B cell (primary cell): ENCODE measurements at regions of chr19 and their contacts with region 1.

Region 1: DNA sequence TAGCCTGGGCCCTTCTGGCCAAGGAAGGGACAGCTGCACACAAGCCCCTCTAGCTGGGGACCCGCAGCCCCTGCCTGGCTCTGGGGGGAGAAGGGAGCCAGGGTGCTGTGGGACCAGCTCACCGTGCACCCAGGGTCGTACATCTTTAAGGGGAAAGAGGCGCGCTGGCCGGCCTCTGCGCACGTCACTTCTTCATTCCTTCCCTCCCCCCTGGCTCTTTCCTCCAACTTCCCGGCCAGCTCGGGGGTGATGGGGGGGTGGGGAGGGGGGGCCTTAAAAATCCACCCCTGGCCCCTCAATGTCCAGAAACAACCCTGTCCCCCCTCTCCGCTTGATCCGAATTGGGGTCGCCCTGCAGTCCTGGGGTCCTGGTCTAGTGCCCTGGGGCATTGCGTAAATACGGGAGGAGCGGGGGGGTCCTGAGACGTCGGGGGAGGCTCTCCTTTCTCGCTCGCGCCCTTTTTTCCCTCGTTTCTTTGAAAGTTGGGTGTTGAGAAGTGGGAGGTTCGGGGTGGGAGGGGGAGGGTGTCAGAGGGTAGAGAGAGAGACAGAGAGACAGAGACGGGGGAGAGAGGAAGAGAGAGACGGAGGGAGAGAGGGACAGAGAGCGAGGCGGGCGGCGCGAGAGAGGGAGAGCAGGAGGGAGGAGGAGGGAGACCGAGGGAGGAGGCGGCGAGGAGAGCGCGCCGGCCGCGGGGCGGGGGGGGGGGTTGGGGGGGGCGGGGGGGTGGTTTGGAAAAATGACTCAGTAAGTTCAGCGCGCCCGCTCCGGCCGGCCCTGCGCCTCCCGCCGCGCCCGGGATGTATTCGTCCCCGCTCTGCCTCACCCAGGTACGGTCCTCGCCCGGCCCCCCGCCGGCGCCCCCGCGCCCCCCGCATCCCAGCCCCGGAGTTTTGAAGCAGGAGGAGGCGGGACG is at the start of gene NFIC:
- DNase-seq: no peak
- ATAC-seq: no peak
- H3K4me3 ChIP-seq: peak within 1 kb of the TSS; percentile 29 to 56 (median 44)
- H3K4me3 Mint-ChIP-seq: peak within 1 kb of the TSS; percentile 74
- H3K27ac ChIP-seq: no peak within 1 kb of the TSS
- H3K27ac Mint-ChIP-seq: peak within 1 kb of the TSS; percentile 34
- H3K4me1 ChIP-seq: peaks cover 45 to 52% of the 10 kb centered on the region in 2 donors
- H3K4me1 Mint-ChIP-seq: peaks cover 53% of the 10 kb centered on the region
- H3K27me3 ChIP-seq: peaks cover 0 to 27% (median 11%) of the 10 kb centered on the region in 4 experiments
- H3K27me3 Mint-ChIP-seq: peaks cover 26% of the 10 kb centered on the region
- CTCF ChIP-seq: no peak
- total RNA-seq, gene NFIC: 23.6 and 24.3 TPM in 2 replicates

Region 2: DNA sequence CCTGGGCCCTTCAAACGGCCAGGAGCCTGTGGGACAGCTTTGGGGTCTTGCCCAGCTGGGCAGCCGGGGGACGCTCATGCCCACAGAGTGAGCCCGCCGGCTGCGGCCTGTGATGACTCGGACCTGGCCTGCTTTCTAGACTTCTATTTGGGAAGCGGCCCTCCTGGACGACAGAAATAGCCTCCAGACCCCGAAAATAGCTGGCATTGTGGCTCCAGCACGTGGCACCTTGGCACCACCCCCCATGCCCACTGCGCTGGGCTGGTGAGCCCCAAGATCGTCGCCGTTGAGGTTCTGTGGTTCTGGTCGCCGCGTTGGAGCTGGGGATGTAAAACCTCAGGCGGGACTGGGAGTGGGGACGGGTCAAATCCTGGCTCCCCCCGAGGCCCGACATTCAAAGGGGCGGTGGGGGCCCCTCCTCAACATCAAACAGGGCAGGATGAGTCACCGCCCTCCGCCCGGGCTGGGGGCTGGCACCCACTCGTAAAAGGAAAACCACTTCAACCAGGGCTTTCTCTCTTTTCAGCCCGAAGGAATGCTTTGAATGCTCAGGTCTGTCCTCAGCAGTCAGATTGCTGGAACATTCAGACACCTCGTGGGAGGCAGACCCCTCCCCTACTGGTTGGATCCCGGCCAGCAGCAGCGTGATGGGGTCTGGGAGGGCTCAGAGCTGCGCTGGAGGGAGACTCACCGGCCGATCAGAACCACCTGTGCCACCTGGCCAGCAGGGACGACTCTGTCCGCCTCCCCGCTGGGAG is 848.0 kb before region 1 on chr19:
- CTCF ChIA-PET with region 1: no interaction called
- POLR2A ChIA-PET with region 1: no interaction called
- intact Hi-C with region 1: loop called (anchors 10 kb)
- DNase-seq: no peak
- ATAC-seq: no peak
- H3K4me3 ChIP-seq: no peak overlapping the region
- H3K4me3 Mint-ChIP-seq: no peak overlapping the region
- H3K27ac ChIP-seq: no peak overlapping the region
- H3K27ac Mint-ChIP-seq: no peak overlapping the region
- H3K4me1 ChIP-seq: peaks cover 0 to 4% of the 10 kb centered on the region in 2 donors
- H3K4me1 Mint-ChIP-seq: peaks cover 4% of the 10 kb centered on the region
- H3K27me3 ChIP-seq: no peaks in the 10 kb centered on the region
- H3K27me3 Mint-ChIP-seq: no peaks in the 10 kb centered on the region
- CTCF ChIP-seq: no peak

Region 3: DNA sequence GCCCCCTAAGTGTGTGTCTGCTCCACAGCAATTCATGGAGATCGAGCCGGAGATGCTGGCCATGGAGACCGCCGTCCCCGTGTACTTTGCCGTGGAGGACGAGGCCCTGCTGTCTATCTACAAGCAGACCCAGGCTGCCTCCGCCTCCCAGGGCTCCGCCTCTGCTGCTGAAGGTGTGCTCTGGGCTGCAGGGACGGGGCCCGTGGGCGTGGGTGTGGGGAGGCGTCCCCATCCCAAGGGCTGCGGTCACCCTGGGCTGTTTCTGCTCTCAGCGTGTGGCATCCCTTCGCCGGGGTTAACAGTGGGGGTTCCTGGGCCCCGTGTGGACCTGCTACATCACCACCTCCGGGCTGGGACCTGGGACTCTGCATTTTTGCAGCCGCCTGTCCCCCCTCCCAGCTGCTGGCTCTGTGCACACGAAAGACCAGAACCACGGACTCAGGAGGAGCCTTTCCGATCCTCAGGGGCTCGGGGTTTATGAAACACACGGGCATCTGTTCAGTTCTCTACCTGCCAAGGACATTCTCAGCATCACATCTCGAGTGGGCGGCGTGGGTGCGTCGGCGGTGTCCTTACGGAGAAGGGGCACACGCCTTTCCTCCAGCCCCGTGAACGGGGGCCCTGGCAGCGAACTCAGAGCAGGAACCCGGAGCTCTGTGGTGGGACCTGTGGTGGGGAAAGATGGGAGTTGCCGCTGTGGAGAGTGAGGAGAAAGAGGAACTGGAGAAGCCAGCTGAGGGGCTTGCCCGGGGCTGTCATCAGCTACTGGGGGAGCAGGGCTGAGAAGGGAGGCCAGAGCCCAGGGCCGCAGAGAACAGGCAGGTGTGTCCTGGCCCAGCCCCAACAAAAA is 172.6 kb before region 1 on chr19:
- CTCF ChIA-PET with region 1: no interaction called
- POLR2A ChIA-PET with region 1: no interaction called
- intact Hi-C with region 1: no loop called
- DNase-seq: no peak
- ATAC-seq: peak; percentile 28
- H3K4me3 ChIP-seq: no peak overlapping the region
- H3K4me3 Mint-ChIP-seq: no peak overlapping the region
- H3K27ac ChIP-seq: no peak overlapping the region
- H3K27ac Mint-ChIP-seq: no peak overlapping the region
- H3K4me1 ChIP-seq: peaks cover 6 to 19% of the 10 kb centered on the region in 2 donors
- H3K4me1 Mint-ChIP-seq: peaks cover 17% of the 10 kb centered on the region
- H3K27me3 ChIP-seq: no peaks in the 10 kb centered on the region
- H3K27me3 Mint-ChIP-seq: no peaks in the 10 kb centered on the region
- CTCF ChIP-seq: no peak

Region 4: GRCh38 chr19:3398114-3398899 is 32.2 kb after region 1 on chr19:
- CTCF ChIA-PET with region 1: no interaction called
- POLR2A ChIA-PET with region 1: no interaction called
- intact Hi-C with region 1: no loop called
- DNase-seq: no peak
- ATAC-seq: no peak
- H3K4me3 ChIP-seq: no peak overlapping the region
- H3K4me3 Mint-ChIP-seq: no peak overlapping the region
- H3K27ac ChIP-seq: no peak overlapping the region
- H3K27ac Mint-ChIP-seq: no peak overlapping the region
- H3K4me1 ChIP-seq: no peaks in the 10 kb centered on the region
- H3K4me1 Mint-ChIP-seq: no peaks in the 10 kb centered on the region
- H3K27me3 ChIP-seq: no peaks in the 10 kb centered on the region
- H3K27me3 Mint-ChIP-seq: no peaks in the 10 kb centered on the region
- CTCF ChIP-seq: no peak